Head of caudate nucleus (tissue), 42 donors: ENCODE measurements at regions of chr9 and their contacts with region 1.

Region 1: GRCh38 chr9:137034863-137035761 is 3.2 kb upstream of the FUT7 start:
- DNase-seq: peak; percentile 81 to 95 (median 90)

Region 2: GRCh38 chr9:136949817-136950655 is 85.1 kb before region 1 on chr9:
- intact Hi-C with region 1: loop called (anchors 5 kb)
- DNase-seq: peak; percentile 95 to 100 (median 99)

Region 3: GRCh38 chr9:137021979-137022619 is 13.0 kb before region 1 on chr9:
- intact Hi-C with region 1: no loop called
- DNase-seq: peak; percentile 60 to 97 (median 89)

Region 4: DNA sequence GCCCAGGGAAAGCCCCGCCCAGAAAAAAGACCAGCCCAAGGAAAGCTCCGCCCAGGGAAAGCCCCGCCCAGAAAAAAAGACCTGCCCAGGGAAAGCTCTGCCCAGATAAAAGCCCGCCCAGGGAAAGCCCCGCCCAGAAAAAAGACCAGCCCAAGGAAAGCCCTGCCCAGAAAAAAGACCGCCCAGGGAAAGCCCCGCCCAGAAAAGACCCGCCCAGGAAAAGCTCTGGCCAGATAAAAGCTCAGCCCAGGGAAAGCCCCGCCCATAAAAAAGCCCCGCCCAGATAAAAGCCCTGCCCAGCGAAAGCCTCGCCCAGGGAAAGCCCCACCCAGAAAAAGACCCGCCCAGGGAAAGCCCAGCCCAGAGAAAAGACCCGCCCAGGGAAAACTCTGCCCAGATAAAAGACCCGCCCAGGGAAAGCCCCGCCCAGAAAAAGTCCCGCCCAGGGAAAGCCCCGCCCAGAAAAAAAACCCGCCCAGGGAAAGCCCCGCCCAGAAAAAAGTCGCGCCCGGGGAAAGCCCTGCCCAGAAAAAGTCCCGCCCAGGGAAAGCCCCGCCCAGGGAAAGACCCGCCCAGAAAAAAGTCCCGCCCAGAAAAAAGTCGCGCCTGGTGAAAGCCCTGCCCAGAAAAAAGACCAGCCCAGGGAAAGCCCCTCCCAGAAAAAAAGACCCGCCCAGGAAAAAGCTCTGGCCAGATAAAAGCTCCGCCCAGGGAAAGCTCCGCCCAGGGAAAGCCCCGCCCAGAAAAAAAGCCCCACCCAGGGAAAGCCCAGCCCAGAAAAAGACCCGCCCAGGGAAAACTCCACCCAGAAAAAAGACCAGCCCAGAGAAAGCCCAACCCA is 115.7 kb after region 1 on chr9:
- intact Hi-C with region 1: no loop called
- DNase-seq: peak in 4 of 42 donors; percentile 30 to 52 (median 40)